ENCODE measurements at regions of chr13 and their contacts with region 1.

Region 1: DNA sequence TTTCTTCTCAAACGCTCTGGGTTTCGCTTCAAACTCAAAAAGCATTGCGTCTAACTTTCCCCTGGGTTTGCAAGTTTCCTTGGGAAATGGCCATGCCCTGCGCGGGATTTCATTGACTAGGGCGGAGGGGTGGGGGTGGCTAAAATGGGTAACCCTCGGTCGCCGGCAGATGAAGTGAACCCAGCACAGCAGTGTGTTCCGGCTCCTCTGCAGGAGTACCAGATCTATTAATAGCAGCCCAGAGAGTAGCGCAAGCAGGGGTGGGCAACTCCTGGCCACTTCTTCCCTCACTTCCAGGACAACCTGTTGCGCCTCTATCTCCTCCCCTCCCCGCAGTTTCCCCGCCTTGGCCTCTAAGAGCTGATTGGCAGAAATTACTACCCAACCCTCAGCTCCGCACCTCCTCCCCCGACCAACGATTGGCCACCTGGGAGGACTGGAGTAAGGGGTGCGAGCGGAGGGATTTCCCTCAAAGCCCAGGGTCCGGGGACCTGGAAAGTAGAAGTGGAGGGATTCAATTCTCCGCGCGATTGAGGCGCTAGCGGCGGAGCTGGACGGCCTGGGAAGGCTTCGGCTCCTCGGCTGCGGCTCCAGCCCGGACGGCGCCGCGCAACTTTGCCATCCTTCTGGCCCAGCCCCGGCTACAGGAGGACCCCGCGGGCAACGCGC is at the start of gene FREM2:
- DNase-seq: peak; percentile 97
- H3K4me3 ChIP-seq: peak within 1 kb of the TSS; percentile 65
- H3K27ac ChIP-seq: no peak within 1 kb of the TSS
- H3K4me1 ChIP-seq: peaks cover 9% of the 10 kb centered on the region
- H3K27me3 ChIP-seq: no peaks in the 10 kb centered on the region
- CTCF ChIP-seq: no peak
- total RNA-seq, gene FREM2: 3.8 and 4.5 TPM in 2 replicates

Region 2: GRCh38 chr13:38718374-38718773 is 31.7 kb after region 1 on chr13:
- CTCF ChIA-PET with region 1: no interaction called
- POLR2A ChIA-PET with region 1: interaction called, 14 read pairs
- intact Hi-C with region 1: no loop called
- DNase-seq: no peak
- H3K4me3 ChIP-seq: no peak overlapping the region
- H3K27ac ChIP-seq: no peak overlapping the region
- H3K4me1 ChIP-seq: no peaks in the 10 kb centered on the region
- H3K27me3 ChIP-seq: no peaks in the 10 kb centered on the region
- CTCF ChIP-seq: no peak